Transverse colon (tissue), 4 donors: ENCODE measurements at regions of chr7 and their contacts with region 1.

Region 1: GRCh38 chr7:5077740-5078139 is 32.1 kb downstream of the RBAK start:
- DNase-seq: no peak
- H3K4me3 ChIP-seq: no peak overlapping the region
- H3K27ac ChIP-seq: no peak overlapping the region
- H3K4me1 ChIP-seq: no peaks in the 10 kb centered on the region
- H3K27me3 ChIP-seq: peaks cover 14% of the 10 kb centered on the region
- CTCF ChIP-seq: no peak
- EP300 ChIP-seq: no peak
- POLR2A ChIP-seq: no peak

Region 2: DNA sequence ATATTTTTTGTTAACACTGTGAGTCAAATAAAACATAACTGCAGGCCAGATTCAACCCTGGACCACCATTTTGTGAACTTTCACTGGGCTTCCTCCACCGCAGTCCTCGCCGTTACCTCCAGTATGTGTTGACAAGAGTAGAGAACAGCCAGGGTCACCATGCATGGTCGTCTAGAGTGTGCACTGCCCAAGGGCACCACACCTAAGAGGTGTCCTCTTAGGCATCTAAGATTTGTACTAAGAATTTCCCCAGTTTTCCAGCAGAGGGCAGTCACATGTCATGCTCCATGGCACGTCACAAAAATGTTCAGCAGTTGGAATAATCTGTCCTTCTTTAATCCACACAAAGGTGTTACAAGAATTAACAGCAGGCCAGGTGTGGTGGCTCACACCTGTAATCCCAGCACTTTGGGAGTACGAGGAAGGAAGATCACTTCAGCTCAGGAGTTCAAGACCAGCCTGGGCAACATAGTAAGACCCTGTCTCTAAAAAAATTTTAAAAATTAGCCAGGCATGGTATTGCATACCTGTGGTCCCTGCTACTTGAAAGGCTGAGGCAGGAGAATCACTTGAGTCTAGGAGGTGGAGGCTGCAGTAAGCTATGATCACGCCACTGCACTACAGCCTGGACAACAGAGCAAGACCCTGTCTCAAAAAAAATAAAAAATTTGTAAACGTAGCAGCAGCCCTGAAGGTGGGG is 466.8 kb before region 1 on chr7:
- in situ Hi-C with region 1: loop called in 2 of 4 experiments (anchors 25 kb)
- intact Hi-C with region 1: no loop called
- DNase-seq: peak; percentile 55
- H3K4me3 ChIP-seq: no peak overlapping the region
- H3K27ac ChIP-seq: no peak overlapping the region
- H3K4me1 ChIP-seq: peaks cover 0 to 10% (median 0%) of the 10 kb centered on the region in 4 donors
- H3K27me3 ChIP-seq: peaks cover under 1% of the 10 kb centered on the region
- CTCF ChIP-seq: peak; percentile 77 to 92 (median 86)
- EP300 ChIP-seq: no peak
- POLR2A ChIP-seq: no peak

Region 3: GRCh38 chr7:4650433-4651047 is 427.2 kb before region 1 on chr7:
- in situ Hi-C with region 1: loop called in 1 of 4 experiments (anchors 25 kb)
- intact Hi-C with region 1: no loop called
- DNase-seq: no peak
- H3K4me3 ChIP-seq: no peak overlapping the region
- H3K27ac ChIP-seq: peak overlapping the region; percentile 15 to 56 (median 50)
- H3K4me1 ChIP-seq: peaks cover 0 to 6% (median 2%) of the 10 kb centered on the region in 4 donors
- H3K27me3 ChIP-seq: no peaks in the 10 kb centered on the region
- CTCF ChIP-seq: no peak
- EP300 ChIP-seq: no peak
- POLR2A ChIP-seq: no peak

Region 4: DNA sequence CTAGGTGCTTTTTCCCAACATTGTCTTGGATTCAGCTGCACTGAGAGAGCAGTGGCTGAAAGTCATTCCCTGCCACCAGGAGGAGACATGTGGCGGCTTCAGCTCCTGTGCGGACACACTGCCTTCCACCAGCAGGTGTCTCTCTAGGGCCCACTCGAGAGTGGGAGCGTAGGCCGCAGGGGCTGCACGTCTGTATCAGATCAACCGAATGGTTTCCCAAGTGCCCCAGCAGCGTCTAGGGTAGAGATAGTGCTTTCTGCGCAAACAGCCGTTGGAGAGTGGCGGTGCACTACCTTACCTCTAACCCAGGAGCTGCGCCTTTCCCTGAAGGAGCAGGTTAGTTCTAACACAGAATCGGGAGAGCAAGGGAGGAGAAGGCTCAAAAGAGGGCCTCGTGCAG is 247.6 kb before region 1 on chr7:
- in situ Hi-C with region 1: loop called in 3 of 4 experiments (anchors 25 kb)
- intact Hi-C with region 1: no loop called
- DNase-seq: peak; percentile 53
- H3K4me3 ChIP-seq: no peak overlapping the region
- H3K27ac ChIP-seq: no peak overlapping the region
- H3K4me1 ChIP-seq: no peaks in the 10 kb centered on the region
- H3K27me3 ChIP-seq: no peaks in the 10 kb centered on the region
- CTCF ChIP-seq: peak; percentile 57 to 75 (median 62)
- EP300 ChIP-seq: no peak
- POLR2A ChIP-seq: no peak

Region 5: GRCh38 chr7:5780801-5781496 is 703.2 kb after region 1 on chr7:
- in situ Hi-C with region 1: no loop called
- intact Hi-C with region 1: no loop called
- DNase-seq: peak; percentile 39
- H3K4me3 ChIP-seq: peak overlapping the region; percentile 69 to 94 (median 80)
- H3K27ac ChIP-seq: peak overlapping the region; percentile 93 to 97 (median 96)
- H3K4me1 ChIP-seq: peaks cover 0 to 22% (median 8%) of the 10 kb centered on the region in 4 donors
- H3K27me3 ChIP-seq: no peaks in the 10 kb centered on the region
- CTCF ChIP-seq: no peak
- EP300 ChIP-seq: no peak
- POLR2A ChIP-seq: no peak